ENCODE measurements at regions of chr4 and their contacts with region 1.

Region 1: GRCh38 chr4:94621491-94622080 is 136.2 kb upstream of the BMPR1B start:
- DNase-seq: no peak
- H3K4me3 Mint-ChIP-seq: no peak overlapping the region
- H3K27ac Mint-ChIP-seq: no peak overlapping the region
- H3K4me1 Mint-ChIP-seq: no peaks in the 10 kb centered on the region
- H3K27me3 Mint-ChIP-seq: no peaks in the 10 kb centered on the region

Region 2: GRCh38 chr4:94803181-94803580 is 181.6 kb after region 1 on chr4:
- CTCF ChIA-PET with region 1: no interaction called
- POLR2A ChIA-PET with region 1: no interaction called
- intact Hi-C with region 1: no loop called
- DNase-seq: no peak
- H3K4me3 Mint-ChIP-seq: no peak overlapping the region
- H3K27ac Mint-ChIP-seq: no peak overlapping the region
- H3K4me1 Mint-ChIP-seq: no peaks in the 10 kb centered on the region
- H3K27me3 Mint-ChIP-seq: no peaks in the 10 kb centered on the region

Region 3: DNA sequence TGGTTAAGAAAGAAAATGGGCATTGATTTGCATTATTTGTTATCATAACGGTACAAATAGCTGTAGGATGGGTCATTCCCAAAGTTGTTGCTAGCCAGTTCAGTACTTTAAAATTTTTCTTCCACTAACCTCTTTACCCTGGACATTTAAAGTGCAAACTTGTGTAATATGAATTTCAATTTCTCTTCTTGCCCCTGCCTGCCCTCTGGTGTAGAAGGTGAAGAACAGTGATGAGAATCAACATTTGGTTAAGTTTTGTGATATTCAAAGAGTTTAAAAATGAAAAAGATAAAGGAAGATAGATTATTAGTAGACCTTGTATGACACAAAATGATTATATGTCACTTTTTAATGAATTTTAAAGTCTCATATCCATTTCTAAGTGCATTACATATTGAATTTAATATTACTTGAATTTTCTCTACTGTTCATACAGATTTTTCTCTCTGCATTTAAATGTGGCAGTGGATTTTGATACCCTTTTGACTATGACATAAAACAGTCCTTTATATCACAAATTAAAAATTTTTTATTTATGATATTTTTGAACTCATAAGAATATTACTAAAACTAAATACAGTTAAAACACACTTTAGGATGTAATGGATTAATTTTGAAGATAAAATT is 473.9 kb after region 1 on chr4:
- CTCF ChIA-PET with region 1: interaction called, 3 read pairs
- POLR2A ChIA-PET with region 1: no interaction called
- intact Hi-C with region 1: loop called (anchors 1 kb)
- DNase-seq: no peak
- H3K4me3 Mint-ChIP-seq: no peak overlapping the region
- H3K27ac Mint-ChIP-seq: no peak overlapping the region
- H3K4me1 Mint-ChIP-seq: no peaks in the 10 kb centered on the region
- H3K27me3 Mint-ChIP-seq: peaks cover 2% of the 10 kb centered on the region

Region 4: DNA sequence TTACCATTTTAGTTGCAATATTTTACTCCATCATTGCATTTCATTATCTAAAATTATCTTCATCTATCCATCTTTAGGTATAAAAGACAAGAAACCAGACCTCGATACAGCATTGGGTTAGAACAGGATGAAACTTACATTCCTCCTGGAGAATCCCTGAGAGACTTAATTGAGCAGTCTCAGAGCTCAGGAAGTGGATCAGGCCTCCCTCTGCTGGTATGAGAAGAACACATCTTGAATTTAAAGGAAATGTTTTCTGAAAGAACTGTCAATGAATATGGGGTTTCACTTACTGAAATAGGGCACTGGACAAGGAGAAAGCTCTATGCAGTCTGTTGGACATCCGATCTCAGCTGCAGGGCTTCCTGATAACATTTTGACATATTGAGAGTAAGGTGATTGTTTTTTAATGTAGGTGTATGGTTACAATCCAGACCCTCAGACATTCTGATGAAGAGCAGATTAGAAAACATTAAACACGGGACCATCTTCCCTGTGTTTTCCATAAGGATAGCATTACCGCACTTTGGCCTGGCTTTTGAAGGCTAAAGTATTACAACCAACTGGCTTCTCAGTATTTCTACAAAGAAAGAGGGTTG is 503.4 kb after region 1 on chr4:
- CTCF ChIA-PET with region 1: interaction called, 9 read pairs
- POLR2A ChIA-PET with region 1: no interaction called
- intact Hi-C with region 1: loop called (anchors 1 kb)
- DNase-seq: no peak
- H3K4me3 Mint-ChIP-seq: no peak overlapping the region
- H3K27ac Mint-ChIP-seq: no peak overlapping the region
- H3K4me1 Mint-ChIP-seq: peaks cover 4% of the 10 kb centered on the region
- H3K27me3 Mint-ChIP-seq: peaks cover 1% of the 10 kb centered on the region